Left ventricle myocardium inferior (tissue), 1 donor: ENCODE measurements at regions of chr7 and their contacts with region 1.

Region 1: GRCh38 chr7:111571720-111572119 is 9.4 kb upstream of the IMMP2L start:
- DNase-seq: no peak
- H3K4me3 ChIP-seq: no peak overlapping the region
- H3K27ac ChIP-seq: no peak overlapping the region
- H3K4me1 ChIP-seq: no peaks in the 10 kb centered on the region
- H3K27me3 ChIP-seq: no peaks in the 10 kb centered on the region
- CTCF ChIP-seq: no peak

Region 2: GRCh38 chr7:111727905-111728634 is 156.3 kb after region 1 on chr7:
- intact Hi-C with region 1: loop called (anchors 10 kb)
- DNase-seq: no peak
- H3K4me3 ChIP-seq: no peak overlapping the region
- H3K27ac ChIP-seq: no peak overlapping the region
- H3K4me1 ChIP-seq: no peaks in the 10 kb centered on the region
- H3K27me3 ChIP-seq: no peaks in the 10 kb centered on the region
- CTCF ChIP-seq: no peak